Activated CD4-positive, alpha-beta memory T cell treated with anti-CD3 and anti-CD28 coated beads, Interleukin-2, amount 10 ng/mL, durations not matched to agents 7 days and 5 days (primary cell): ENCODE measurements at regions of chr12 and their contacts with region 1.

Region 1: GRCh38 chr12:118372541-118373495 is at the start of gene TAOK3:
- DNase-seq: peak; percentile 98
- H3K4me3 Mint-ChIP-seq: peak within 1 kb of the TSS; percentile 95
- H3K27ac Mint-ChIP-seq: peak within 1 kb of the TSS; percentile 90
- H3K4me1 Mint-ChIP-seq: peaks cover 52% of the 10 kb centered on the region
- H3K27me3 Mint-ChIP-seq: no peaks in the 10 kb centered on the region
- total RNA-seq, gene TAOK3: 61.9 to 65.5 TPM

Region 2: DNA sequence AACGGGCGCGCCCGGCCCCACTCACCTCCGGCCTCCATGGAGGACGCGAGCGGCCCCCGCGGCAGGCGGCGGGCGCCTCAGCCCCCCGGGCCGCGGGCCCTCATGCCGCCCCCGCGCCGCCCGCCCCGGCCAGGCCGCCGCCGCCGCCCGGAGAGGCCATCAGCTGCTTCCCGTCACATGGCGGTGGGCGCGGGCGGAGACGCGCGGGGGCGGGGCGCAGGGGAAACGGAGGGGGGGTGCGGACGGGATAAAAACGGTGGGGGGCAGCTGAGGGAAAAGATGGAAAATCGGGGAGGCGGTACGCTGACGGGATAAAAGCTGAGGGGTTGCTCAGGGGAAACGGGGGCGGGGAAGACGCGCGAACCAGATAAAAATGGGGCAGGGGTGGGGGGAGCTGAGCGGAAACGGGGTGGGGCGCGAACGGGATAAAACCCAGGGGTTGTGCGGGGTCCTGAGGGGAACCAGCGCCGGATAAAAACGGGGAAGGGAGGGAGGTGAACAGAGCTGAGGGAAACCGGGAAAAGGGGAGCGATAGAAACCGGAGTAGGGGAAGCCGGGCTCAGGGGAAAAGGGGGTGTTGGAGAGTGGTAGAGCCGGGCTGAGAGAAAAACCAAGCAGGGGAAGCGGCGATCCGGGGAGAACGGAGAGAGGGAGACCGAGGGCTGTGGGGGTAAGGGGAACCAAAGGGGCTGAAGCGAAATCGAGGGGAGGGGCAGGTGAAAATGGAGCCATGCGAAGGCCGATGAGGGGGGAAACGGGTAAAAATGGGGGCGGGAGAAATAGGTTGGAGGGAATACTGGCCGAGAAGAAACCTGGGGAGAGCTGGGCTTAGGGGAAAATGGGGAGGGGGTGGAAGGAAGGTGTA is 311.6 kb before region 1 on chr12 and contains the start of gene WSB2:
- CTCF ChIA-PET with region 1: interaction called, 15 read pairs
- POLR2A ChIA-PET with region 1: interaction called, 25 read pairs
- DNase-seq: peak; percentile 64
- H3K4me3 Mint-ChIP-seq: peak within 1 kb of the TSS; percentile 91
- H3K27ac Mint-ChIP-seq: peak within 1 kb of the TSS; percentile 90
- H3K4me1 Mint-ChIP-seq: peaks cover 53% of the 10 kb centered on the region
- H3K27me3 Mint-ChIP-seq: no peaks in the 10 kb centered on the region
- total RNA-seq, gene WSB2: 49.6 to 53.9 TPM

Region 3: GRCh38 chr12:118164798-118165486 is 207.9 kb before region 1 on chr12:
- CTCF ChIA-PET with region 1: interaction called, 20 read pairs
- POLR2A ChIA-PET with region 1: interaction called, 8 read pairs
- DNase-seq: no peak
- H3K4me3 Mint-ChIP-seq: no peak overlapping the region
- H3K27ac Mint-ChIP-seq: no peak overlapping the region
- H3K4me1 Mint-ChIP-seq: peaks cover 22% of the 10 kb centered on the region
- H3K27me3 Mint-ChIP-seq: no peaks in the 10 kb centered on the region

Region 4: GRCh38 chr12:118307069-118307954 is 65.5 kb before region 1 on chr12:
- CTCF ChIA-PET with region 1: interaction called, 28 read pairs
- POLR2A ChIA-PET with region 1: interaction called, 10 read pairs
- DNase-seq: peak; percentile 43
- H3K4me3 Mint-ChIP-seq: peak overlapping the region; percentile 59
- H3K27ac Mint-ChIP-seq: peak overlapping the region; percentile 71
- H3K4me1 Mint-ChIP-seq: peaks cover 46% of the 10 kb centered on the region
- H3K27me3 Mint-ChIP-seq: no peaks in the 10 kb centered on the region

Region 5: DNA sequence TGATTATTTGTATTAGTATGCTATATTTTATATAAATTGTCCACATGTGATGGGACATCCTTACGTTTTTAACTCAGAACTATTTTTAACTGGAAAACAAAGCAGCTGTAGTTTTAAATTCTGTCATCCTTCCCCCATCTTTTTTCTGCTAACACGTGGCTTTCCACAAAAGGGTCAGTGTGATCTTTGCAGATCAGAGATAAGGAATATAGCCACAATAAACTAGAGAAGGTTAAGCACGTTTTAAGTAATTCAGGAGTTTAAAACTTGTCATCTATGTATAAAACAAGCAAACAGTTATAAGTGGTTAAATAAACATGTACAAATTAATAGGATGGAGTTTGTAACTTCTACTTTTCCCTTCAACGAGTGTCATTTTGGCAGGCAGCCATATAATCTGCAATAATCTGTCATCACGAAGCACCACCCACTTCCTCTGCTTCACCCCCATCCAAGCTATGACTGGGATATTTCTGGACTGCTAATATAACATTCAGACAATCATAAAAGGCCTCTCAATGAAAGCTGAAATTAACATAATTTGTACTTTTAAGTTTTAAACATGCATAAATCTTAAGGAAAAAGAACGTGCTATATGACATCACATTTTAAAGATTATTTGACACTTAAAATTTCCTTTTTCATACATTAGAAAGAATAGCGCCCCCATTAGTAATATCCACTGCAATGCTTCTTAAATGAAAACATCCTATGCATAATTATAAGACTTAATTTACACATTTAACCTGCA is 15.4 kb before region 1 on chr12:
- CTCF ChIA-PET with region 1: interaction called, 138 read pairs
- POLR2A ChIA-PET with region 1: interaction called, 106 read pairs
- DNase-seq: peak; percentile 52
- H3K4me3 Mint-ChIP-seq: peak overlapping the region; percentile 95
- H3K27ac Mint-ChIP-seq: peak overlapping the region; percentile 80
- H3K4me1 Mint-ChIP-seq: peaks cover 42% of the 10 kb centered on the region
- H3K27me3 Mint-ChIP-seq: no peaks in the 10 kb centered on the region

Region 6: GRCh38 chr12:118513611-118514010 is 140.8 kb after region 1 on chr12:
- CTCF ChIA-PET with region 1: no interaction called
- POLR2A ChIA-PET with region 1: no interaction called
- DNase-seq: no peak
- H3K4me3 Mint-ChIP-seq: no peak overlapping the region
- H3K27ac Mint-ChIP-seq: no peak overlapping the region
- H3K4me1 Mint-ChIP-seq: no peaks in the 10 kb centered on the region
- H3K27me3 Mint-ChIP-seq: no peaks in the 10 kb centered on the region

Region 7: DNA sequence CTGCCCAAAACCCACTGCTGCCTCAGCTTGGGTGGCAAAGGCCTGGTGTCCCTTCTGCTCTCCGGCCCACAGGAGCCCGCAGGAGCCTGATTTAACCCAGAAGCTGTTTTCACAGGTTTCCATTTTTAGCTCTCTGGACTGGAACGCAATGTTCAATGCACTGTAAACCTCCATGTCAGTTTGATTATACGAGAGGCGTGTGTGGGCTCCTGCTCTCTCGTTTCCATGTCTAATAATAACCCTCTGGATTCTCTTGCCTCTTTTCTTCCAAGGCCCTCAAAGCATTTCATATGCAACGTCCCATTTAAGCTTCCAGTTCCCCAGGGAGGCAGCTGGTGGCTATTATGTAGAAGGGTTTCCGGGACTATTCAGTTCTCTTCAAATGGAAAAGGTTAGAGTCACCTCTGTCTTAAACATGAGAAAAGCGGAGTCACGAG is 164.7 kb after region 1 on chr12:
- CTCF ChIA-PET with region 1: no interaction called
- POLR2A ChIA-PET with region 1: no interaction called
- DNase-seq: no peak
- H3K4me3 Mint-ChIP-seq: no peak overlapping the region
- H3K27ac Mint-ChIP-seq: no peak overlapping the region
- H3K4me1 Mint-ChIP-seq: no peaks in the 10 kb centered on the region
- H3K27me3 Mint-ChIP-seq: no peaks in the 10 kb centered on the region